ENCODE measurements at regions of chr2 and their contacts with region 1.

Region 1: GRCh38 chr2:117958186-117958585 is 55.7 kb downstream of the CCDC93 start:
- DNase-seq: peak; percentile 41
- H3K4me3 ChIP-seq: no peak overlapping the region
- H3K27ac ChIP-seq: peak overlapping the region; percentile 2
- H3K4me1 ChIP-seq: peaks cover 6% of the 10 kb centered on the region
- H3K27me3 ChIP-seq: no peaks in the 10 kb centered on the region
- CTCF ChIP-seq: no peak

Region 2: DNA sequence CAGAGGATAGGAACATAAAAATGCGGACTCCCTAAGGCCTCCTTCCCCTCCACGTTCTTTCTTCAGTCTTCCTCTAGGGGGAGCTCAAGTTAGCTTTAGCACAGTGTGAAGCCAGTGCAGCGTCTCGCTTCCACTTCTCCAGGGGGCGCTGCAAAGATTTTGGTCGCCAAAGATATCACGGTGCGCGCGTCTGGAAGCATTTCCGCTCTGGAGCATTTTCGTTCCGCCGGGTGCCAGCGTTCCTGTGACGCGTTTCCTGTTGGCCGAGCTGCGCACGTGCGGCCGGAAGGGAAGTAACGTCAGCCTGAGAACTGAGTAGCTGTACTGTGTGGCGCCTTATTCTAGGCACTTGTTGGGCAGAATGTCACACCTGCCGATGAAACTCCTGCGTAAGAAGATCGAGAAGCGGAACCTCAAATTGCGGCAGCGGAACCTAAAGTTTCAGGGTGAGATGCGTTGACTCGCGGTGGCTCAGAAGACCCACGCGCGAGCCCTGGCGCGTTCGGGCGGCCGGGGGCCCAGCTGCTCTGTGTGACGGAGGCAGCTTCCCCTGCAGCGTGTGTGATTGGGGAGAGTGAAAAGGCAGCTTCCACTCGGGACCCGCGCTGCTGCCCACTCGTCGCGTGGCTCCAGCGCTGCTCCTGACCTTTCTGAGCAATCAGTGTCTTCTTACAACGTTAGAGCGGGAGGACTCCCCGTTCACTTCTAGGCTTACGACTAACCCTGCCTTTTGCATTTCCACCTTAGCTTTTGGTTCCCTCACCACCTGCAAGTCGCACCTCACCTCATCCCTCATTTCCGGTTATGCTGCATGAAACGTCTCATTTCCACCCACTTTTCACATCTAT is 143.5 kb before region 1 on chr2 and contains the start of gene DDX18:
- intact Hi-C with region 1: loop called (anchors 10 kb)
- DNase-seq: peak; percentile 99
- H3K4me3 ChIP-seq: peak within 1 kb of the TSS; percentile 87
- H3K27ac ChIP-seq: peak within 1 kb of the TSS; percentile 75
- H3K4me1 ChIP-seq: peaks cover 7% of the 10 kb centered on the region
- H3K27me3 ChIP-seq: no peaks in the 10 kb centered on the region
- CTCF ChIP-seq: peak; percentile 99
- total RNA-seq, gene DDX18: 42.0 to 63.3 TPM

Measured in colonic mucosa (tissue), 4 donors.